ENCODE measurements at regions of chr6 and their contacts with region 1.

Region 1: GRCh38 chr6:136737871-136738691 is 54.2 kb downstream of the MAP3K5 start:
- DNase-seq: no peak
- CTCF ChIP-seq: no peak

Region 2: DNA sequence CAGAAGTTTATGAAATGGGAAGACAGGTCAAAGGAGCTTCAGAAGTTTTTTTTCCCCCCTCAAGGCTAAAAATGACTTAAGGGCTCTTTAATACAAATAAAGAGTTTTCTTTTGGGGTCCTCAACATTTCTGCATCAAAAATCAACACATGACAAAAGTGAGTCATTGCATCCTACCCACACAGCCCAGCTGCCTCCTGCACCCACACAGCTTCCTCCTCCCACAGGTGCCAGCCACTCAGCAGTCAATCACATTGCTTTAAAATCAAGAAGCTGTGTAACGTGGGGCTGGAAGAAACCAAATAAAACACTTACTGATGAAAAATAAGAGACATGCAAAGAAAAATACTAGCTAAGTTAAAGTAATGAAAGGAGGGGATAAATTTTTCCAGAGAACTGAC is 14.3 kb before region 1 on chr6:
- CTCF ChIA-PET with region 1: interaction called, 54 read pairs
- POLR2A ChIA-PET with region 1: no interaction called
- DNase-seq: no peak
- CTCF ChIP-seq: no peak

Measured in GM10248 (cell line).